ENCODE measurements at regions of chr2 and their contacts with region 1.

Region 1: DNA sequence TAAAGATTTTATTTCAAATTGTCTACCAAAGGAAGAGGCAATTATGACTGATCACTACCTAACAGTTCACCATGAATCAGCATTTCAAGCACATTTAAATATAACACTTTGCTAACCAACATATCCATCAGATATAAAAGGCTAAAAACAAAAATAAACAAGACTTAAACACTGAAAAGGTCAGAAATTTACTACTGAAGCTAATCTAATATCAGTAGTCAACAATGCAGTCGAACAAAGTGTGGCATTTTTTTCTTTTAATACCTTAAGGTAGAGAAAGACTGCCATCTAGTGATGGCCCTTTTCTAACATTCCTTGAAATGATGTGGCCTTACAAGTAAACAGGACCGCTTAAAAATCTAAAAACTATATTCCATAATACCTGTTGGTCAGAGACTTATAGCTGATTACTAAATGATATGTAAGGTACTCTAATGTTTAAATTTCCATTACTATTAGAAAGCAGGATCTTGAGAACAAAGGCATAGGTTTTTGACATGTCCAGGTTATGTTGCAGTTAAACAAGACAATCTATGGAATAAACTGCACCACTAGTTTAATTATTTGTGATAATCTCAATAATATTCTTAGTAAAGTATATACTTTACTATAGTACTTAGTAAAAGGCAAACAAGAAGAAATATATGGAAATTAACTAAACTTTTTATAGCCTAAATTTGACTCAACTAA is 80.0 kb downstream of the EXOC6B start:
- DNase-seq: peak; percentile 55
- ATAC-seq: no peak
- H3K4me3 ChIP-seq: no peak overlapping the region
- H3K27ac ChIP-seq: peak overlapping the region; percentile 48; the same call in 1 of the 2 replicates
- H3K4me1 ChIP-seq: no peaks in the 10 kb centered on the region; the same call in 1 of the 2 replicates
- H3K27me3 ChIP-seq: no peaks in the 10 kb centered on the region
- CTCF ChIP-seq: peak; percentile 74; the same call in 1 of the 2 replicates

Region 2: GRCh38 chr2:71923887-71924533 is 821.8 kb before region 1 on chr2:
- CTCF ChIA-PET with region 1: no interaction called
- POLR2A ChIA-PET with region 1: no interaction called
- in situ Hi-C with region 1: no loop called
- intact Hi-C with region 1: loop called (anchors 10 kb)
- DNase-seq: peak; percentile 61
- ATAC-seq: peak; percentile 90
- H3K4me3 ChIP-seq: no peak overlapping the region
- H3K27ac ChIP-seq: no peak overlapping the region
- H3K4me1 ChIP-seq: no peaks in the 10 kb centered on the region
- H3K27me3 ChIP-seq: no peaks in the 10 kb centered on the region
- CTCF ChIP-seq: peak; percentile 87

Region 3: DNA sequence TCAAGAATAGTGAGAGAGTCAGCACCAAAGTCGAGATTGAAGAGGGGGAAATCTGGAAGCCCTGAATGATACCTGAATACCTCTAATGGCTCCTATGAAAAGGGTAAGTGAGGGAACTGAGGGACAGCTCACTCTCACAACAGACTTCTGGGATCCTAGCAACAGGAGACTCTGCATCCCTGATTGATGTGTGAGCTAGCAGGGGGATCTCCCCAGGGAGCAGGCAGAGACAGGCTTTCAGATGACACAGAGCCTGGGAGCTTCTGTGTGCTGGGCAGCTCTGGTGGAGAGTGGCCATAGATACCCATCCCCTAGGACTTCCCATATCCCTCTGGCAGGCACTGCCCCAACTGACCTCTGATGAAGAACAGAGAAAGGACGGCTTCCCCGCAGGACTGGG is 126.2 kb before region 1 on chr2:
- CTCF ChIA-PET with region 1: no interaction called
- POLR2A ChIA-PET with region 1: no interaction called
- in situ Hi-C with region 1: no loop called
- intact Hi-C with region 1: loop called (anchors 10 kb)
- DNase-seq: no peak
- ATAC-seq: no peak
- H3K4me3 ChIP-seq: no peak overlapping the region
- H3K27ac ChIP-seq: no peak overlapping the region
- H3K4me1 ChIP-seq: no peaks in the 10 kb centered on the region
- H3K27me3 ChIP-seq: no peaks in the 10 kb centered on the region
- CTCF ChIP-seq: no peak

Measured in Panc1 (cell line).